Psoas muscle (tissue), 8 donors: ENCODE measurements at regions of chr10 and their contacts with region 1.

Region 1: GRCh38 chr10:72692057-72692910 is at the start of gene MCU:
- DNase-seq: peak; percentile 94 to 97
- ATAC-seq: peak; percentile 90 to 94 (median 92)
- H3K4me3 ChIP-seq: peak within 1 kb of the TSS; percentile 94
- H3K27ac ChIP-seq: peak within 1 kb of the TSS; percentile 93
- H3K4me1 ChIP-seq: peaks cover 50% of the 10 kb centered on the region
- H3K27me3 ChIP-seq: no peaks in the 10 kb centered on the region
- CTCF ChIP-seq: peak; percentile 9
- total RNA-seq, gene MCU: 66.1 to 118 (median 80.1) TPM

Region 2: DNA sequence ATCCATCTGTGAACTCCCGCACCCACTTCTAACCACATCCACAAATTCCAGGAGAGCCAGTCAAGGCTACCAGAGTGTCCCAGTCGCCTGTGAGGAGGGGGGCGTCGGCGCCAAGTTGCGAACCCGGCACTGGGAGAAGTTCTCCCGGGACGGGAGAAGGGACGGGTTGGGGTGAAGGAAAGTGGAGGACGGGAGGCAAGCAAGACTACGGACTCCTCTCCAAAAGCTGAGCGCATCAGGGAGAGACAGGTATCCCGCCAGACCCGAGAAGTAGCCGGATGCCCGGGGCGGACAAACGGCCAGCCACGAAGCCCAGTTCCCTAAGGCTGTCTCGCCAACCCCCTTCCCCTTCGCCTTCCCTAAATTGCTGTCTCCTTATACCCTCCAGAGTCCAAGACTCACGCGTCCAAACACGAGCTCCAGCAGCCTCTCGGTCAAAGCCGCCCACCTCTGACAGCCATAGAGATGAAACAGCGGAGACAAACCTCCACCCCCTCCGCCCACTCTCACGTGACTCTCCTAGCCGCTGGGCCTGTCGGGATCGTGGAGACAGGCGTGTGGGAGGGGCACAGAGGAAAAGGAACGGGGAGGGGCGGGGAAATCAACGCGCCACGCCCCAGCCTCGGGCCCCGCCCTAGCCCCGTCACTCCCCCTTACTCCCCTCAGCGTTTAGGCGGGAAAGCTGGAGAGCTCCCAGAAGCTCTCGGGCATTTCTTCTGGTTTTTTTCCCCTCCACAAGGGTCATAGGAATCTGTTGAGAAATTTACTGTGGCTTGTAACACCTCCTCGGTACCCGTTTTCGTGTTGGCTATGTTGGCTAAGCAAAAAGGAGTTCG is 66.5 kb before region 1 on chr10 and contains the start of gene MICU1:
- intact Hi-C with region 1: loop called (anchors 5 kb)
- DNase-seq: peak; percentile 96 to 97
- ATAC-seq: peak; percentile 100
- H3K4me3 ChIP-seq: peak within 1 kb of the TSS; percentile 87
- H3K27ac ChIP-seq: peak within 1 kb of the TSS; percentile 86
- H3K4me1 ChIP-seq: peaks cover 19% of the 10 kb centered on the region
- H3K27me3 ChIP-seq: no peaks in the 10 kb centered on the region
- CTCF ChIP-seq: no peak
- total RNA-seq, gene MICU1: 37.3 to 57.8 (median 46.6) TPM

Region 3: GRCh38 chr10:72740528-72740927 is 48.2 kb after region 1 on chr10:
- intact Hi-C with region 1: loop called in 1 of 2 experiments (anchors 5 kb)
- DNase-seq: peak; percentile 27 to 69
- ATAC-seq: peak; percentile 92 to 95 (median 94)
- H3K4me3 ChIP-seq: peak overlapping the region; percentile 8
- H3K27ac ChIP-seq: peak overlapping the region; percentile 82
- H3K4me1 ChIP-seq: peaks cover 67% of the 10 kb centered on the region
- H3K27me3 ChIP-seq: no peaks in the 10 kb centered on the region
- CTCF ChIP-seq: no peak

Region 4: DNA sequence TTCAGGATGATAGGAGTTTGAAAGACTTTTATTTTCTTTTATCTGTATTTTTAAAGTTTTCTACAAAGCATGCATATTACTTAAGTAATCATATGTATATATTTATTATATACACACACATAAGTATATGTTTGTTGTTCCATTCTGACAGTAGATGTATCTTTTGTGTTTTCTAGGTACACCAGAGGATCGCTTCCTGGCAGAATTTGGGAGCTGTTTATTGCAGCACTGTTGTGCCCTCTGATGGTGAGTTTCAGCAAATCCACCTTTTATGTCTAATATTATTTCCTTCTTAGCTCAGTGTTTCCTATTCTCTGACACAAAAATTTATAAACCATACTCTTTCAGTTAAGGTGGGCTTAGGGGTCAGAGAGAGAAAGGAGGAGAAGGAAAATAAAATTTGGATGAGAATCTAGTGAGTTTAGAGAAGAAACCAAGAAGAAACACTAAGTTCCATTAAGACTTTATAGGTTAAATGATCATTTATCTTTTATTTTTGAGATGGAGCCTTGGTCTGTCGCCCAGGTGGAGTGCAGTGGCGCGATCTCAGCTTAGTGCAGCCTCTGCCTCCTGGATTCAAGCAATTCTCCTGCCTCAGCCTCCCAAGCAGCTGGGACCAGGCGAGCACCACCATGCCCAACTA is 142.0 kb after region 1 on chr10:
- intact Hi-C with region 1: loop called (anchors 2 to 5 kb)
- DNase-seq: no peak
- ATAC-seq: peak; percentile 37 to 86 (median 75)
- H3K4me3 ChIP-seq: no peak overlapping the region
- H3K27ac ChIP-seq: no peak overlapping the region
- H3K4me1 ChIP-seq: peaks cover 27% of the 10 kb centered on the region
- H3K27me3 ChIP-seq: no peaks in the 10 kb centered on the region
- CTCF ChIP-seq: peak; percentile 63

Region 5: GRCh38 chr10:72875250-72876055 is 183.2 kb after region 1 on chr10:
- intact Hi-C with region 1: loop called in 1 of 2 experiments (anchors 2 kb)
- DNase-seq: no peak
- ATAC-seq: peak in 2 of 4 donors; percentile 59 to 73
- H3K4me3 ChIP-seq: no peak overlapping the region
- H3K27ac ChIP-seq: no peak overlapping the region
- H3K4me1 ChIP-seq: no peaks in the 10 kb centered on the region
- H3K27me3 ChIP-seq: no peaks in the 10 kb centered on the region
- CTCF ChIP-seq: peak; percentile 49